ENCODE measurements at regions of chr3 and their contacts with region 1.

Region 1: GRCh38 chr3:124552239-124552638 is 178.0 kb upstream of the UMPS start:
- DNase-seq: peak; percentile 22
- H3K4me3 ChIP-seq: no peak overlapping the region
- H3K27ac ChIP-seq: no peak overlapping the region
- H3K4me1 ChIP-seq: peaks cover 11% of the 10 kb centered on the region
- H3K27me3 ChIP-seq: no peaks in the 10 kb centered on the region
- CTCF ChIP-seq: no peak
- POLR2A ChIP-seq: no peak

Region 2: DNA sequence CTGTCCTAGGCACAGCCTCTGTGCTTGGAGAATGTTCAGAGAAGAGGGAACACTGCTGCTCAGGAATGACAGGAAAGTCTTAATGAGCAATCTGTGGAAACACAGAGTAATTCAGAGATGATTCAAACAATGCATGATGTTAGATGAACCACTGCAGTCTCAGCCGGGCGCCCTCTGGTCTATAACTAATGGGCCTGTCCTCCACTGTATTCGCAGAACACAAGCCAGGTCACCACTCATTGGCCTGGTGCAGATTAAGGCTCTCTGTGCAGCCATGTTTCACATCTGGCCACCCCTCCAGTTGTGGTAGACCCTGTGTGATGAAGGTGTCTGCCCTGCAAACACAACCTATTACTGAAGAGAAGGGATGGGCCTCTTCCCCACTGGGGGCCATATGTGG is 278.6 kb before region 1 on chr3:
- CTCF ChIA-PET with region 1: no interaction called
- POLR2A ChIA-PET with region 1: no interaction called
- dilution Hi-C with region 1: no loop called
- intact Hi-C with region 1: no loop called
- DNase-seq: no peak
- H3K4me3 ChIP-seq: no peak overlapping the region
- H3K27ac ChIP-seq: no peak overlapping the region
- H3K4me1 ChIP-seq: peaks cover 32% of the 10 kb centered on the region
- H3K27me3 ChIP-seq: no peaks in the 10 kb centered on the region
- CTCF ChIP-seq: no peak
- POLR2A ChIP-seq: no peak

Region 3: DNA sequence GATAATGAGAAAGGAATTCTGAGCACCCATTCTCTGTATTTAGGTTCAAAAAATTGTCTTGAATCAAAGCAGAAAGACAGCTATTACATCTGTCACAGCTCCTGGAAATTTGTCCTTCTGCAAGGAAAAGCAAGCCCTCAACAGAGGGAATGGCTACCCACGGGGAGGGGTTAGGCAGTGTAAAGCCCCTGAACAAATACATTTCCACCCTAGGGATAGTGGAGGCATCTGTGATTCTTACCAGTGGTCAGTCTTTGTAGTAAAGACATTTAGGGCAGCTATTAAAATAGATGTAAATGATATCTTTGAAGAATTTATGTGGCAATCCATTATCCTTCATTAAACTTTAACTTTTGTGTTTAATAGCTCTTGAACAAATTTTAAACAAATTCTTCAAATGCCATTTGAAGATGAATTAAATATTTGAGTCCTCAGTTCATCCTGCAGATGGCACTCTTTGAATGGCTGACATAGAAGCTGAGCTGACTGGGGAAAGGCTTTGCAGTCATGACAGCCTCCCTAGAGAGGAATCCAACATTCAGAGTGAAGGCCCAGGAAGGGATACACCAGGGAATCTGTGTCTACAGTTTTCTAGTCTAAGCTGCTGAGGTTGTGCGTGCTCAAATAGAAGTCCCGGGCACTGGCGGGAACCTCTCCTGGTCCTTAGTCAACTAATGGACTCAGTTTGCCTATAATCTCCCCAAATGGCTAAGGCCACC is 200.7 kb before region 1 on chr3:
- CTCF ChIA-PET with region 1: interaction called, 50 read pairs
- POLR2A ChIA-PET with region 1: no interaction called
- dilution Hi-C with region 1: no loop called
- intact Hi-C with region 1: loop called (anchors 1 kb)
- DNase-seq: peak; percentile 61
- H3K4me3 ChIP-seq: no peak overlapping the region
- H3K27ac ChIP-seq: no peak overlapping the region
- H3K4me1 ChIP-seq: no peaks in the 10 kb centered on the region
- H3K27me3 ChIP-seq: peaks cover 0 to 2% of the 10 kb centered on the region in 2 experiments
- CTCF ChIP-seq: peak; percentile 38 to 54
- POLR2A ChIP-seq: no peak

Region 4: DNA sequence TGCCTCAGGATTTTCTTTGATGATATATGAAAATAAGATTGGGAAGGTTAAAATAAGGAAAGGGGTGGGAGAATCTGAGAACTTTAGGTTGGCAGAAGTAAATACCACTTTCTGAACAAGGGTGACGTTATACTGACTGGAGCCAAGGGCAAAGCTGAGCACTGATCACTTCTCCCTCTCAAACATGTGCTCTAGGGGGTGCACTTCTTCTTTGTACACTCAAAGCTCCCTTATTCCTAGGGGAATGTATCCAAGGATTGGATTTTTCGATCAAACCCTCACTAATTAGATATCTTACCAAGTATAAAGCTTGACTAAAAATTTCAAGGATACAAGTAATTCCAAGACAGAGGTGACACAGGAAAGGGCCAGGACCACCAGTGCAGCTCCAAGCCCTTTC is 65.9 kb before region 1 on chr3:
- CTCF ChIA-PET with region 1: interaction called, 11 read pairs
- POLR2A ChIA-PET with region 1: no interaction called
- dilution Hi-C with region 1: no loop called
- intact Hi-C with region 1: no loop called
- DNase-seq: no peak
- H3K4me3 ChIP-seq: no peak overlapping the region
- H3K27ac ChIP-seq: no peak overlapping the region
- H3K4me1 ChIP-seq: no peaks in the 10 kb centered on the region
- H3K27me3 ChIP-seq: no peaks in the 10 kb centered on the region
- CTCF ChIP-seq: no peak
- POLR2A ChIP-seq: no peak

Region 5: GRCh38 chr3:124529826-124530571 is 22.2 kb before region 1 on chr3:
- CTCF ChIA-PET with region 1: interaction called, 10 read pairs
- POLR2A ChIA-PET with region 1: no interaction called
- dilution Hi-C with region 1: no loop called
- intact Hi-C with region 1: no loop called
- DNase-seq: peak; percentile 15
- H3K4me3 ChIP-seq: no peak overlapping the region
- H3K27ac ChIP-seq: no peak overlapping the region
- H3K4me1 ChIP-seq: peaks cover 3% of the 10 kb centered on the region
- H3K27me3 ChIP-seq: peaks cover 0 to 2% of the 10 kb centered on the region in 2 experiments
- CTCF ChIP-seq: no peak
- POLR2A ChIP-seq: no peak

Measured in endothelial cell of umbilical vein (primary cell).